ENCODE measurements at regions of chr3 and their contacts with region 1.

Region 1: GRCh38 chr3:18469775-18470174 is 44.6 kb upstream of the SATB1 start:
- DNase-seq: no peak
- ATAC-seq: no peak
- H3K4me3 ChIP-seq: no peak overlapping the region
- H3K4me3 Mint-ChIP-seq: no peak overlapping the region
- H3K27ac ChIP-seq: no peak overlapping the region
- H3K27ac Mint-ChIP-seq: no peak overlapping the region
- H3K4me1 ChIP-seq: no peaks in the 10 kb centered on the region
- H3K4me1 Mint-ChIP-seq: peaks cover 4% of the 10 kb centered on the region
- H3K27me3 ChIP-seq: no peaks in the 10 kb centered on the region
- H3K27me3 Mint-ChIP-seq: no peaks in the 10 kb centered on the region
- CTCF ChIP-seq: no peak

Region 2: GRCh38 chr3:18454766-18455165 is 15.0 kb before region 1 on chr3:
- CTCF ChIA-PET with region 1: interaction called, 3 read pairs
- POLR2A ChIA-PET with region 1: no interaction called
- intact Hi-C with region 1: loop called in 1 of 2 experiments (anchors 2 kb)
- DNase-seq: no peak
- ATAC-seq: no peak
- H3K4me3 ChIP-seq: no peak overlapping the region
- H3K4me3 Mint-ChIP-seq: no peak overlapping the region
- H3K27ac ChIP-seq: no peak overlapping the region
- H3K27ac Mint-ChIP-seq: no peak overlapping the region
- H3K4me1 ChIP-seq: peaks cover 11% of the 10 kb centered on the region
- H3K4me1 Mint-ChIP-seq: peaks cover 65% of the 10 kb centered on the region
- H3K27me3 ChIP-seq: no peaks in the 10 kb centered on the region
- H3K27me3 Mint-ChIP-seq: no peaks in the 10 kb centered on the region
- CTCF ChIP-seq: no peak

Measured in CD8-positive, alpha-beta T cell (primary cell).